HEK293 (cell line): ENCODE measurements at regions of chr6 and their contacts with region 1.

Region 1: DNA sequence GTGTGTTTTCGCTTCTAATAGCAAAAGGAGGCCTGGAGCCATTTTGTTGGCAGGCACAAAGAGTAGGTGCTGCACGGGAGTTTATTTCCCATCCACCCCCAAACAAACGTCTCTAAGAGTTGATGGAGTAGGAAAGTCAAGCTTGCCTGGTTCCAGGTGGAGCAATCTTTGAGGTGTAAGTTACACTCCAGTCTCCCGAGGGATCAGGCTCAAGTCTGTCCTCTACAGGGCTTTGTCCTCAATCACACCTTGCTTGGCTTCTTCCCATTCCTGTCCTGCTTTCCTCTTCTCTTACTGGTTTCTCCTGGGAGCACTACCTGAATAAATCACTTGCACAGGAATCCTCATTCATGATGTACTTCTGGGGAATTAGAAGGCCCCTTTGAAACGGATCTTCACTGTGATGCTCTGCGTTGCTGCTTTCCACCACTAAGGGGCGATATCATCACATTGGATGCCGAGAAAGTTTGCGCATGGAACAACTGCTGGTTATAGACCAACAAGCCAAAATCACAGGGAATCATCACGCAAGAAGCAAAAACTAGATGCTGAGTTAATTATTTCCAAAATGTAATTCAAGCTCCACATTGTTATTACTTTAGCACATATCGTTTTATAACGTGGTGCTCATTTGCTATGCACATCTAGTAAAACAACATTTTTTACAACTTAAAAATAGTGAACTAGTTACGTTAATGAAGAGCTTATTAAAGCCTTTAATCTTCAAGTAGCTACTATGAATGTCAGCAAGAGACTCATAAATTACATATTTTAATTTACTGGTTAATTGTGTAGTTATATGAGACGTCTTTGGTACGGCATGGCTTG is 156.8 kb downstream of the DNAH8 start:
- H3K4me3 ChIP-seq: no peak overlapping the region
- H3K27ac ChIP-seq: no peak overlapping the region
- H3K4me1 ChIP-seq: no peaks in the 10 kb centered on the region
- CTCF ChIP-seq: peak; percentile 92

Region 2: DNA sequence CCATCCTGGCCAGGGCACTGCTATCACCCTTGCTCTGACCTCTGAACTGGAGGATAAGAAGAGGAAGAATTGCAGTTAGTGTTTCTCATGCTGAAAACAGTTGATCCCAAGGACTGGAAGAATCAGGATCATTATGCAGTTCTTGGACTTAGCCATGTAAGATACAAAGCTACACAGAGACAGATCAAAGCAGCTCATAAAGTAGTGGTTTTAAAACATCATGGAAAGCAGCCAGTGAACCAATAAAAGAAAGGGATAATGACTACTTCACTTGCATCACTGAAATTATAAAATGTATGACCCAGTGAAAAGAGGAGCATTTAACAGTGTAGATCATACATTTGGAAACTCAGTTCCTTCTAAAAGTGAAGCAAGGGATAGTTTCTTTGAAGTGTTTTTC is 109.1 kb before region 1 on chr6:
- CTCF ChIA-PET with region 1: no interaction called
- POLR2A ChIA-PET with region 1: no interaction called
- H3K4me3 ChIP-seq: no peak overlapping the region
- H3K27ac ChIP-seq: no peak overlapping the region
- H3K4me1 ChIP-seq: no peaks in the 10 kb centered on the region
- CTCF ChIP-seq: no peak

Region 3: DNA sequence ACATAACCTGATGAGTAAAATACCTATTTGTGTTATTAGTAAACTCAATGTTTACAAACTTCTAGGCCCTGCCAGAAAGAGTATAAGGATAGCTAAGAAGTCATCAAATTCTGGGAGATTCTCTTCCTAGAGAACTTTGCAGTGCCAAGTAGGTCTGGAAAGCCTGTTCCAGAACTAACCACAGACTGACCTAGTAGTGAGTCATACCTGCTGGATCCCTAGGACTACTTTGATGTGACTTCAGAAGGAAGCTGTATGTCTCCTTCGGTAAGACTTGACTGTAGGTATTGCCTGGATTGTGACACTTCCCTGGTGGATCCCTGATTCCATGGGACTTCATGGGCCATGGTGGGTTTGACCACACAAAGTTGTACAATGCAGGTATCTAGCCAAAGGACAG is 25.1 kb before region 1 on chr6:
- CTCF ChIA-PET with region 1: interaction called, 18 read pairs
- POLR2A ChIA-PET with region 1: no interaction called
- H3K4me3 ChIP-seq: no peak overlapping the region
- H3K27ac ChIP-seq: no peak overlapping the region
- H3K4me1 ChIP-seq: no peaks in the 10 kb centered on the region
- CTCF ChIP-seq: no peak

Region 4: DNA sequence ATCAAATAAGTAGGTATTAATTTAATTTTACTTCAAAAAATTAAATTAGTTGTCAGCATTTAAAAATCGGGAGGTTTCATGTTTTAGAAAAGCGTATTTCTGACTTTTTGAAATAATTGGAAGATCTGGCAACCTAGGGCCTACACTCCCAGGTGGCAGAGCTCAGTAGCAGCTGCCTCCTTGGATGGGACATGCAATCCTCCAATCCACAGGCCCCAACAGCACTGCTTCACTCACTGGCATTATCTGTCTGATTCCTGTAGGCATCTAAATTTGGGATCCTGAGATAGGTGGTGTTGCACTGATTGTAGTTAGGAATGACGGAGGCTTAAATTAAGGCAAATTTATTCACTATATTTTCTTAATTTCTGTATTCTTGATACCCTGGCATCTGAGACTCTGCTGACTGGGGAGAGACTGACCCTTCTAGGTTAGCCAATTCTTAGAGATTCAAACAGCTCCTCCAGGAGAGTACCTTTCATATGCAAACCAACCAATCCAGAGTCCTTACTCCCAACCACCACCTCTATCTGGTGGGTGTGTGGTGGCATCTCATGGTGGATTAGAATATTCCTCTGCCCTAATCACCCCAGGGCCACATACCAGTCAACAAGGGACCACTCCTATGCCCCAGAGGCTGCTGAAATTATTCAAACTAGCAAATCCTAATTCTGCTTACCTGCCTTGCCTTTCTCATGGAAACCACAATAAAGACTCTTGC is 30.0 kb after region 1 on chr6:
- CTCF ChIA-PET with region 1: interaction called, 19 read pairs
- POLR2A ChIA-PET with region 1: no interaction called
- H3K4me3 ChIP-seq: no peak overlapping the region
- H3K27ac ChIP-seq: no peak overlapping the region
- H3K4me1 ChIP-seq: no peaks in the 10 kb centered on the region
- CTCF ChIP-seq: no peak

Region 5: DNA sequence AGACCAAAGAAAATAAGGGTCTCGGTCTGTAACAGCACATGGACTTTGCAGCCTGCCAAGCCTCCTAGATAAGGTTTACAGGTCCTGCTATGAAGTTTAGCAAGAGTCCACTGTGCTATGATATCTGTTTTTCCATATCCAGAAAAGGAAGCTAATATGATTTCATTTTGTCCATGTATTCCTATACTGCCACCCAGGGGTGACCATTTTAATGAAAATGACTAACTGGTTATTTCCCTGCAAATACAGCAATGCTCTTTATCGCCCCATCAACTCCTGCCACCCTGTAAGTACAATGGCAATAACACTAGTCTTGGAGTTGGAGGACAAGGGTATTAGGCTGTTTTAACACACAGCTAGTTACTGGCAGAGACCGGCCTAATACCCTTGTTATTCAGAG is 61.5 kb after region 1 on chr6:
- CTCF ChIA-PET with region 1: interaction called, 23 read pairs
- POLR2A ChIA-PET with region 1: no interaction called
- H3K4me3 ChIP-seq: no peak overlapping the region
- H3K27ac ChIP-seq: no peak overlapping the region
- H3K4me1 ChIP-seq: no peaks in the 10 kb centered on the region
- CTCF ChIP-seq: 0 out of 2 replicates have a peak, but pooled peaks have one; percentile 33

Region 6: GRCh38 chr6:38997128-38997761 is 125.3 kb after region 1 on chr6:
- CTCF ChIA-PET with region 1: interaction called, 25 read pairs
- POLR2A ChIA-PET with region 1: no interaction called
- H3K4me3 ChIP-seq: no peak overlapping the region
- H3K27ac ChIP-seq: no peak overlapping the region
- H3K4me1 ChIP-seq: no peaks in the 10 kb centered on the region
- CTCF ChIP-seq: peak; percentile 42

Region 7: DNA sequence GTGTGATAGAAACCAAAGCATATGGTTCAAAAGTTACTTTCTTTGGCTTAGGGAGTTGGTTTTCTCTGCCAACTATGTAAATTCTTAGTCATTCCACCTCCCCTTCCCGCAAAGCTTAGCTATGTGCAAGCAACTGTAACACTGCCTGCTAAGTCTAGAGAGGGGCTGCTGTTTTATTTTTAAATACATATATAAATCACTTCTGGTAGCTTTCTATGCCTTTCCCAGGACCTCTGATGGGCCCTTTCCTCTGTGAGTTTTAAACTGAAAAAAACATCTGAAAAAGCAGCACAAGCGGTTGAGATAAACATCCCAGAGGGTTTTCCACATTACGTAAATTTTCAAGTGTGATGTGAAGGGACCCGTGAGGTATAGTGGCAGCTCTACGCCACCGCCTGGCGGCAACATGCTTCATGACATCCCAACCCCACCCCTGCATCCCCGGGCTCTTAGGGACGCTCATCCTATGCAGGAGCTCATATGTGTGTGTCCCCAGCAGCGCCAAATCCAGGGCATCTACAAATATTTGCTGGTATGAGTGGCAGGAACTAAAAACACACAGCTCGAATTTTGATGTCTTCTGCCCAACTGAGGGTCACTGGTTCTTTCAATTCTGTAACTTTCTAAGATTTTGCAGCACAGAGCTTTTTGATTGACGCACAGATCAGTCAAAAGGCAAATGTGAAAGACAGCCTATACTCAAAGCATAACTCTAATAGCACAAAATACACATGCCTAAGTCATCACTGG is 230.3 kb after region 1 on chr6:
- CTCF ChIA-PET with region 1: interaction called, 15 read pairs
- POLR2A ChIA-PET with region 1: no interaction called
- H3K4me3 ChIP-seq: no peak overlapping the region
- H3K27ac ChIP-seq: no peak overlapping the region
- H3K4me1 ChIP-seq: no peaks in the 10 kb centered on the region
- CTCF ChIP-seq: no peak

Region 8: GRCh38 chr6:39302669-39303424 is 430.9 kb after region 1 on chr6:
- CTCF ChIA-PET with region 1: interaction called, 28 read pairs
- POLR2A ChIA-PET with region 1: no interaction called
- H3K4me3 ChIP-seq: no peak overlapping the region
- H3K27ac ChIP-seq: no peak overlapping the region
- H3K4me1 ChIP-seq: no peaks in the 10 kb centered on the region
- CTCF ChIP-seq: peak; percentile 96